Prostate gland (tissue), 2 donors: ENCODE measurements at regions of chr13 and their contacts with region 1.

Region 1: DNA sequence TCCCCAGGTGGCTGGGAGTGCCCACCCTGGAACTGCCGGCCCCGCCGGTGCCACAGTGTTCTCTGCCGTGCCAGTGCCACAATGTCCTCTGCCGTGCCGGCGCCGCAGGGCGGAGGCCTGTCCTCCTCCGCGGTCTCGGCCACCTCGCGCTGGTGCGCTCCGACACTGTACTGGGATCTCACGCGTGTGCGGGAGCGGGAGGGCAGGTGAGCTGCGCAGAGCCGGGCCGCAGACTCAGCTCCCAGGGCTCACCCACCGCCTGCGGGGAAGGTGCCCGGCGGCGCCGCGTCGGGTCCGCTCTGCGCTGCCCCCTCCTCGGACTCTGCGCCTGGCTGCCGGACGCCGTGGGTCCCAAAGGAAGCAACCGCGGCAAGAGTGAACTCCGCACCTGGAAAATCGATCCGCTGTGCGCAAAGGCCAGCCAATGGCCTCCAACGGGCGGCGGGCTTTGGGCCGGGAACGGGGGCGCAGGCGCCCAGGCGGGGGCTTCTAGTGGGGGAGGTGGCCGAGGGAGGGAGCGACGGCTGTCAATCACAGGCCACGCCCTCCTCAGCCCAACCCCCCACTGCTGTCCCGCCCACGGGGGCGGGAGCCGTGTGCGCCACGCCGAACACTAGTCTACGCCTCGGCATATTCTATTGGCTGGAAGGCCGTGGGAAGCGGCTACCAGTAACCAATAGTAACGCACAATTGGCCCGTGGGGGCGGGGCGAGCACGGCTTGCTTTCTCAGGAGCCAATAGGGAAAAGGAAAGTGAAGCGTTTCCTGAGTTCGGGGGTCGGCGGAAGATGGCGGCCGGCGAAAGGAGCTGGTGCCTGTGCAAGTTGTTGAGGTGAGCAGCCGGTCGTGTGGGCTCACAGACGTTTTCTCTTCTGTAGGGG is at the start of gene ALG11:
- DNase-seq: peak; percentile 99
- H3K4me3 ChIP-seq: peak within 1 kb of the TSS; percentile 65 to 67
- H3K27ac ChIP-seq: peak within 1 kb of the TSS; percentile 79 to 81
- H3K4me1 ChIP-seq: no peaks in the 10 kb centered on the region
- H3K27me3 ChIP-seq: no peaks in the 10 kb centered on the region
- CTCF ChIP-seq: peak in 2 of 4 experiments; percentile 4 to 12
- POLR2A ChIP-seq: no peak
- total RNA-seq, gene ALG11: 28.9 to 34.1 TPM

Region 2: DNA sequence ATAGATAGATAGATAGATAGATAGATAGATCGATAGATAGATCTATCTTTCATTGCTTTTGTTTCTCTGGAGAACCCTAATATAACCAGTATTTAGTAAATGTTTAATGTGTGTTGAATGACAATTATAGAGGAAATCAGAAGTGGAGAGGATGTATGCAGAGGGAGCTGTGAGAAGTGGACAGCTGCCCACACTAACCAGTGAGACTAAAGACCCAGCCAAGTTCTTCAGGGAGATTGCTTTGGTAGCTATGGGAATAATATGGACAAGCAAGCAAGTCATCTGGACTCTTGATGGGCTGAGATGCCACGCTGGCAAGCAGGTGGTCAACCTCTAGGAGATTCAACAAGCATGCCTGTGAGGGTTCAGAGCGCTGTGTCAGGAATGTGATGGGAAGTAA is 544.1 kb before region 1 on chr13:
- intact Hi-C with region 1: no loop called
- DNase-seq: no peak
- H3K4me3 ChIP-seq: no peak overlapping the region
- H3K27ac ChIP-seq: no peak overlapping the region
- H3K4me1 ChIP-seq: no peaks in the 10 kb centered on the region
- H3K27me3 ChIP-seq: no peaks in the 10 kb centered on the region
- CTCF ChIP-seq: no peak
- POLR2A ChIP-seq: no peak

Region 3: GRCh38 chr13:51814825-51815650 is 196.8 kb before region 1 on chr13:
- intact Hi-C with region 1: loop called (anchors 10 kb)
- DNase-seq: peak; percentile 55
- H3K4me3 ChIP-seq: no peak overlapping the region
- H3K27ac ChIP-seq: no peak overlapping the region
- H3K4me1 ChIP-seq: no peaks in the 10 kb centered on the region
- H3K27me3 ChIP-seq: no peaks in the 10 kb centered on the region
- CTCF ChIP-seq: peak; percentile 44 to 82 (median 75)
- POLR2A ChIP-seq: no peak

Region 4: GRCh38 chr13:52194184-52194868 is 182.5 kb after region 1 on chr13:
- intact Hi-C with region 1: loop called (anchors 10 kb)
- DNase-seq: peak; percentile 79
- H3K4me3 ChIP-seq: peak overlapping the region; percentile 61 to 72
- H3K27ac ChIP-seq: peak overlapping the region; percentile 82 to 88
- H3K4me1 ChIP-seq: no peaks in the 10 kb centered on the region
- H3K27me3 ChIP-seq: no peaks in the 10 kb centered on the region
- CTCF ChIP-seq: peak in 3 of 4 experiments; percentile 6 to 28 (median 6)
- POLR2A ChIP-seq: peak; percentile 32